ENCODE measurements at regions of chr1 and their contacts with region 1.

Region 1: GRCh38 chr1:179334440-179334839 is 31.3 kb upstream of the AXDND1 start:
- DNase-seq: no peak
- H3K4me3 ChIP-seq: no peak overlapping the region
- H3K27ac ChIP-seq: no peak overlapping the region
- H3K4me1 ChIP-seq: peaks cover 3% of the 10 kb centered on the region
- H3K27me3 ChIP-seq: no peaks in the 10 kb centered on the region
- CTCF ChIP-seq: no peak
- POLR2A ChIP-seq: no peak

Region 2: DNA sequence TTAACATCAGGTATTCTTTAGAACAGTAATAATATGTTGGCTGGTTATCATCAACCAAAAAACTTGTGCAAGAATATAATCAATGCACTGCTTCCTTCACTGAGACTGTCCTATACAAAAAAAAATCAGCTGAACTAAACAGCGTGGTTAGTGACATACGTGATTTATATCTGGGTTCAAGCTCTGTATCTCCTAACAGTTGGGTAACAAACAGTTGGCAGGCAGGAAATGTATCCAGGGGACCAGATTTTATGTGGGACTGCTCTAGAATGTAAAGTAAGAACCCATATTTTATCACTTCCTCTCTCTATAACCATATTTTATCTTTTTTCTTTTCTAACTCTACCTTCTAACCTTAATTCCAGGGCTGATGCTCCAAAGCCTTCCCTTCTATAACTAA is 1159.9 kb after region 1 on chr1:
- CTCF ChIA-PET with region 1: no interaction called
- POLR2A ChIA-PET with region 1: interaction called, 13 read pairs
- dilution Hi-C with region 1: no loop called
- intact Hi-C with region 1: no loop called
- DNase-seq: no peak
- H3K4me3 ChIP-seq: no peak overlapping the region
- H3K27ac ChIP-seq: no peak overlapping the region
- H3K4me1 ChIP-seq: no peaks in the 10 kb centered on the region
- H3K27me3 ChIP-seq: no peaks in the 10 kb centered on the region
- CTCF ChIP-seq: no peak
- POLR2A ChIP-seq: no peak

Measured in endothelial cell of umbilical vein (primary cell).